PC-9 (cell line): ENCODE measurements at regions of chr14 and their contacts with region 1.

Region 1: GRCh38 chr14:39174560-39175444 is at the start of gene PNN:
- DNase-seq: peak; percentile 92 to 96
- H3K4me3 ChIP-seq: peak within 1 kb of the TSS; percentile 95
- H3K27ac ChIP-seq: peak within 1 kb of the TSS; percentile 95
- H3K4me1 ChIP-seq: peaks cover 21% of the 10 kb centered on the region
- H3K27me3 ChIP-seq: no peaks in the 10 kb centered on the region
- CTCF ChIP-seq: no peak
- total RNA-seq, gene PNN: 65.8 and 72.0 TPM in 2 replicates

Region 2: GRCh38 chr14:38342803-38343202 is 832.0 kb before region 1 on chr14:
- CTCF ChIA-PET with region 1: no interaction called
- POLR2A ChIA-PET with region 1: no interaction called
- intact Hi-C with region 1: no loop called
- DNase-seq: peak; percentile 9 to 50
- H3K4me3 ChIP-seq: no peak overlapping the region
- H3K27ac ChIP-seq: no peak overlapping the region
- H3K4me1 ChIP-seq: no peaks in the 10 kb centered on the region; the same call in 1 of the 2 replicates
- H3K27me3 ChIP-seq: no peaks in the 10 kb centered on the region
- CTCF ChIP-seq: no peak

Region 3: DNA sequence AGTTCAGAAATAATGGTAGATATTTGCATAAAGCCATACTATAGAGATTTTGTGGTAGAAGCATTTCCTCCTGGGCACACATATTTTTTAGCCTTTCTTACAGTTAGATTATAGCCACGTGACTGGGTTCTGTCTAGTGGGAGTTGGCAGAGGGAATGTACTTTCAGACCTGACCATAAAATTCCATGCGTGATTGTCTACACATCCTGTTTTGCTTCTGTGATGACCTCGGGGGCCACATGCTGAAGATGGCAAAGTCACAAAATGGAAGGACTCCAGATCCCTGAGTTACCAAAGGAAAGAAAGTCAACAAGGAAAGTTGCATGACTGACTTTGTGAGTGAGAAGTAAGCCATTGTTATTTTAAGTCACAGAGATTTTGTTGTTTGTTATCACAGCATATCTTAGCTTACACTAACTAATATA is 44.3 kb after region 1 on chr14:
- CTCF ChIA-PET with region 1: no interaction called
- POLR2A ChIA-PET with region 1: interaction called, 5 read pairs
- intact Hi-C with region 1: loop called (anchors 5 kb)
- DNase-seq: peak in 1 of 2 experiments; percentile 41
- H3K4me3 ChIP-seq: 0 out of 2 replicates have a peak overlapping the region, but pooled peaks have one; percentile 14
- H3K27ac ChIP-seq: peak overlapping the region; percentile 93
- H3K4me1 ChIP-seq: peaks cover 32% of the 10 kb centered on the region
- H3K27me3 ChIP-seq: no peaks in the 10 kb centered on the region
- CTCF ChIP-seq: no peak

Region 4: GRCh38 chr14:39432179-39432618 is 257.4 kb after region 1 on chr14 and contains the start of gene FBXO33:
- CTCF ChIA-PET with region 1: no interaction called
- POLR2A ChIA-PET with region 1: interaction called, 5 read pairs
- intact Hi-C with region 1: loop called (anchors 1 kb)
- DNase-seq: peak; percentile 74 to 91
- H3K4me3 ChIP-seq: peak within 1 kb of the TSS; percentile 94
- H3K27ac ChIP-seq: peak within 1 kb of the TSS; percentile 96
- H3K4me1 ChIP-seq: peaks cover 8% of the 10 kb centered on the region
- H3K27me3 ChIP-seq: no peaks in the 10 kb centered on the region
- CTCF ChIP-seq: no peak
- total RNA-seq, gene FBXO33: 6.2 and 9.0 TPM in 2 replicates